ENCODE measurements at regions of chr15 and their contacts with region 1.

Region 1: GRCh38 chr15:100107606-100108225 is 234.1 kb downstream of the ADAMTS17 start:
- DNase-seq: peak in 1 of 2 experiments; percentile 15
- H3K4me3 ChIP-seq: no peak overlapping the region
- H3K4me3 Mint-ChIP-seq: no peak overlapping the region
- H3K27ac Mint-ChIP-seq: no peak overlapping the region
- H3K4me1 ChIP-seq: no peaks in the 10 kb centered on the region
- H3K4me1 Mint-ChIP-seq: no peaks in the 10 kb centered on the region
- H3K27me3 ChIP-seq: no peaks in the 10 kb centered on the region
- H3K27me3 Mint-ChIP-seq: no peaks in the 10 kb centered on the region
- CTCF ChIP-seq: no peak

Region 2: DNA sequence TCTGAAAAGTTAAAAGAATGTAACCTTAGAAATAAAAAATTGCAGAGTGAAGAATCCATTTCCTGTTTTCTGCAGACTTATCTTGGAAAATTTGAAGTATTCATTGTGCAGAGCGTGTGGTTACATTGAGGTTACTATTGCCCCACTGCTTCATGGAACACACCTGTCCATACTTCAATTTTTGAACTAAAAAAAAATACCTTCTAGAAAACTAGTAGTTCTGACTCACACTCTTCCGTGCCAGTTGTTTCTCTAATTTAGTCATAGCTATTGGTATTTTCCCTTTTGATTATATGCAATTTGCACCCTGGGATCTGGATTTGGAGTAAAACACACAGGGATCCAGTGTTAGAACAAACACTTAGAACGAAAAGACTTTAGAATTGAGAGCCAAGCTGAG is 262.7 kb before region 1 on chr15:
- CTCF ChIA-PET with region 1: no interaction called
- POLR2A ChIA-PET with region 1: no interaction called
- intact Hi-C with region 1: no loop called
- DNase-seq: no peak
- H3K4me3 ChIP-seq: no peak overlapping the region
- H3K4me3 Mint-ChIP-seq: no peak overlapping the region
- H3K27ac Mint-ChIP-seq: no peak overlapping the region
- H3K4me1 ChIP-seq: no peaks in the 10 kb centered on the region
- H3K4me1 Mint-ChIP-seq: no peaks in the 10 kb centered on the region
- H3K27me3 ChIP-seq: peaks cover 1% of the 10 kb centered on the region
- H3K27me3 Mint-ChIP-seq: peaks cover 14% of the 10 kb centered on the region
- CTCF ChIP-seq: no peak

Region 3: GRCh38 chr15:100147828-100148227 is 40.1 kb after region 1 on chr15:
- CTCF ChIA-PET with region 1: no interaction called
- POLR2A ChIA-PET with region 1: no interaction called
- intact Hi-C with region 1: loop called (anchors 2 kb)
- DNase-seq: no peak
- H3K4me3 ChIP-seq: no peak overlapping the region
- H3K4me3 Mint-ChIP-seq: no peak overlapping the region
- H3K27ac Mint-ChIP-seq: no peak overlapping the region
- H3K4me1 ChIP-seq: no peaks in the 10 kb centered on the region
- H3K4me1 Mint-ChIP-seq: no peaks in the 10 kb centered on the region
- H3K27me3 ChIP-seq: no peaks in the 10 kb centered on the region
- H3K27me3 Mint-ChIP-seq: no peaks in the 10 kb centered on the region
- CTCF ChIP-seq: no peak

Region 4: GRCh38 chr15:100468285-100468684 is 360.6 kb after region 1 on chr15:
- CTCF ChIA-PET with region 1: no interaction called
- POLR2A ChIA-PET with region 1: no interaction called
- intact Hi-C with region 1: no loop called
- DNase-seq: no peak
- H3K4me3 ChIP-seq: no peak overlapping the region
- H3K4me3 Mint-ChIP-seq: no peak overlapping the region
- H3K27ac Mint-ChIP-seq: no peak overlapping the region
- H3K4me1 ChIP-seq: no peaks in the 10 kb centered on the region
- H3K4me1 Mint-ChIP-seq: no peaks in the 10 kb centered on the region
- H3K27me3 ChIP-seq: no peaks in the 10 kb centered on the region
- H3K27me3 Mint-ChIP-seq: peaks cover 9% of the 10 kb centered on the region
- CTCF ChIP-seq: no peak